ENCODE measurements at regions of chr17 and their contacts with region 1.

Region 1: DNA sequence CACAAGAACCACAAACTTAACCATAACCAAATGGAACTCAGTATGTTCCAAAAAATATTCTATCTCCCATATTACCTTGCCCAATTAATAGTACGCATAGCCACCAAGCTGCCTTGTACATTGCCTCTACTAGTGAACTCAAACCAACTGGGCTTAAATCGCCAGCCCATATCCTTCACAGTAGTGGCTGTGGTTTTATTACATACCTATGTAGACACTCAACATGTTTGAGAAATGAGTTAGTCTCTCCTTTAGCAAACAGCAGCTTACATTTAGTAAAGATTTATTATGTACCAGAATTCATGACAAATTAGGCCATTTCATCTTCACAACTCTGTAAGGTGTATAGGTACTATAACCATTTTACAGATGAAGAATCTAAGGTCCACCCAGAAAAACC is 41.4 kb downstream of the GRB2 start:
- DNase-seq: no peak
- H3K4me3 Mint-ChIP-seq: no peak overlapping the region
- H3K27ac Mint-ChIP-seq: peak overlapping the region; percentile 34
- H3K4me1 Mint-ChIP-seq: peaks cover 95% of the 10 kb centered on the region
- H3K27me3 Mint-ChIP-seq: no peaks in the 10 kb centered on the region

Region 2: DNA sequence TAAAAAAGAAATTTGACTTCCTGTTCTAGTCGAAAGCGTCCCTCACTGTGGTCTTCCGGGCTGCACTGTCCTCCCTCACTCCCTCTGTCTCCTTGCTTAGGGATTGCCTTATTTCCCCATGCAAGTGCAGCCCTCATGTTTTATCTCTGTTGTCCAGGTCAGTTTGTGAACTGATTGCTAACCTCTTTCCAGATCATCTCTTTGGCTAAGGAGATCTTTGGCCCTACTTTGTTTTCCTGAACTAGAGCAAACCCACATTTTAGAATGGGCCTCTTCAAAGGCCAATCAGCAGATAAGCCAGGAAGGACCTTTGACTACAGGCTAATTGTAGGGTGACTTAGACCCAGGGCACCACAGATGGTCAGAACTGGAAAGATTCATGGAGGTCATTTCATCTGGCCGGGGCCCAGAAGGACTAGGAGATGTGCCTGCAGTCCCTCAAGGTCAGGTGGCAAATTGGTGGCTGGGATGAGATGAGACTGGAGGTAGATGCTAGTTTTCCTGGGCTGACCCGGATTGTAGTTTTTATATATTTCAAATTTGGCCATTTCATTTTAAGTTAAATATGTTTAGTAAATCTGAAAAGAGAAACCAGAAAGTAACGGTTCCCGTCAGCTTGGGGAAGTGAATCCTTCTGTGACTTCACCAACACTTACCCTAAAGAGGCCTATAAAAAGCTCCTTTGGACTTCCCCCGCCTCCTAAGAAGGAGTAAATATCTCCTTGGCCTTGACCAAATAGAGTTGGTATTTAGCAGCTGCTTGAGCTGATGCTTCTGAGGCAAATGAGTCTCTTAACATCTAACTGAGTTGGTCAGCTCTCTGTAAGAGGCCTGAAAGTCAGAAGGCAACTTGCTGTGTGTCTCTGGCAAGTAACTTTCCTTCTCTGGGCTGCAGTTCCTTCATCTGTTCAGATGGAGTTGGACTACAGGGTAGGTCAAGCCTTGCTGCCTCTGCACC is 68.6 kb before region 1 on chr17:
- CTCF ChIA-PET with region 1: no interaction called
- POLR2A ChIA-PET with region 1: no interaction called
- intact Hi-C with region 1: no loop called
- DNase-seq: peak; percentile 58
- H3K4me3 Mint-ChIP-seq: peak overlapping the region; percentile 37
- H3K27ac Mint-ChIP-seq: peak overlapping the region; percentile 99
- H3K4me1 Mint-ChIP-seq: peaks cover 35% of the 10 kb centered on the region
- H3K27me3 Mint-ChIP-seq: no peaks in the 10 kb centered on the region

Region 3: DNA sequence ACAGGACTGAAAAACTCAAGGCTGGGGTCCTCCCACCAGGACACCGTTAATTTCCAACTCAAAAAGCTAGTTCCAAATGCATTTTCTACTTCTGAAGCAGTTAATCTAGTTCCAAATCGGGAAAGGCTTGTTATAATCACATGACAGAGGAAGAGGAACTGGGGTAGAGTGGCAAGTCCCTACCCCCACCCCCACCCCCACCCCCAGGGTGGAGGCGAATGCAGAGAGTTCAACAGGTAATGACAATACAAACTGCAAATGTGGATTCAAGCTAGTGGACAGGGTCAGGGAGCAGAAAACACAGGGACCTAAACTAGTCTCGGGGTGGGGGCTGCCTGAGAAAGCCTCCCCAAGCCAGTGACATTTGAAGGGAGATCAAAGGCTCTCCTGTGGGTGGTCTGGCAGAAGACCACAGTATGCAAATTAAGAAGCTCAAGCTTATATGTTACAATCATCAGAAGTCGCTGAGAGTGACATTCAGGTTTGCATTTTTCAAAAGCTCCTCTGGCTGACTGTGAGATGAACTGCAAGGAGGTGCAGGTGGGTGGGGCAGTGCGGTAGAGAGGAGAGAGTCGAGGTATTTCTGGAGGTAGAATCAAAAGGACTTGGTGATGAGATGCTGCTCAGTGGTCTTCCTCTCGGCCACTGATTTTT is 18.4 kb before region 1 on chr17:
- CTCF ChIA-PET with region 1: interaction called, 7 read pairs
- POLR2A ChIA-PET with region 1: no interaction called
- intact Hi-C with region 1: loop called (anchors 2 kb)
- DNase-seq: peak; percentile 63
- H3K4me3 Mint-ChIP-seq: peak overlapping the region; percentile 43
- H3K27ac Mint-ChIP-seq: peak overlapping the region; percentile 72
- H3K4me1 Mint-ChIP-seq: peaks cover 93% of the 10 kb centered on the region
- H3K27me3 Mint-ChIP-seq: no peaks in the 10 kb centered on the region

Measured in activated CD4-positive, alpha-beta memory T cell treated with anti-CD3 and anti-CD28 coated beads for 36 hours (primary cell).